ENCODE measurements at regions of chr9 and their contacts with region 1.

Region 1: GRCh38 chr9:69847491-69847890 is 26.9 kb downstream of the CFAP95 start:
- DNase-seq: no peak
- ATAC-seq: no peak

Region 2: DNA sequence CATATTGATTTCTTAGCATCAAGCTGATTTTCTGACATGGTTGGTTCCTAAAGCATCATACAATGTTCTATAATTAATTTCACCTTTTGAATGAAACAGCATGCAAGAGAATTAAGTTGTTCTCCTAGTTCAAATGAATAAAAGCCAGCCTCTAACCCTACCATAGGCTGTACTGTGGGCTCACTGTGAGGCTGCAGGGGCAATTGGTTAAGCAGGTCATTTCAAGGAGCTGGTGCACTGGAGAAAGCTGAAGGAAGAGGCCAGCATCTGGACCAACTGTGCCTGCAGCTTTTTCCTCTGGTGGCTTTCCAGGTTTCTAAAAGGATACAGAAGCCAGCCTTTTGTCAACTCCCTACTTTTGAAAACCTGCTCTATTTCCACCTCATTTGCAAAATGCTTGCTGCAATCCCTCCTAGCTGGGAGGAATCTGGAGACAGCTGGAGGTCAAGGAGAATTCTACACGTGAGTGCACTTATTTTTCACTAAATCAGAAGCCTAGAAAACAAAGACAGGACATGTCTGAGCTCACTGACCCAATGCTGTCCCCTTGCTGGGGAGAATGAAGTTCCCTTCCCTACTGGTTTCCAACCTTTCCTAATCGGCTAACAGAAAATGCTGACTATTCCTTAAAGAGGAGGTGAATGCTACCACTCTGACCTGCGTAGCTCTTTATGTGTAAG is 334.2 kb before region 1 on chr9:
- intact Hi-C with region 1: no loop called
- DNase-seq: no peak
- ATAC-seq: no peak

Region 3: GRCh38 chr9:69785757-69786156 is 61.7 kb before region 1 on chr9:
- intact Hi-C with region 1: loop called in 1 of 2 experiments (anchors 10 kb)
- DNase-seq: no peak
- ATAC-seq: no peak

Region 4: DNA sequence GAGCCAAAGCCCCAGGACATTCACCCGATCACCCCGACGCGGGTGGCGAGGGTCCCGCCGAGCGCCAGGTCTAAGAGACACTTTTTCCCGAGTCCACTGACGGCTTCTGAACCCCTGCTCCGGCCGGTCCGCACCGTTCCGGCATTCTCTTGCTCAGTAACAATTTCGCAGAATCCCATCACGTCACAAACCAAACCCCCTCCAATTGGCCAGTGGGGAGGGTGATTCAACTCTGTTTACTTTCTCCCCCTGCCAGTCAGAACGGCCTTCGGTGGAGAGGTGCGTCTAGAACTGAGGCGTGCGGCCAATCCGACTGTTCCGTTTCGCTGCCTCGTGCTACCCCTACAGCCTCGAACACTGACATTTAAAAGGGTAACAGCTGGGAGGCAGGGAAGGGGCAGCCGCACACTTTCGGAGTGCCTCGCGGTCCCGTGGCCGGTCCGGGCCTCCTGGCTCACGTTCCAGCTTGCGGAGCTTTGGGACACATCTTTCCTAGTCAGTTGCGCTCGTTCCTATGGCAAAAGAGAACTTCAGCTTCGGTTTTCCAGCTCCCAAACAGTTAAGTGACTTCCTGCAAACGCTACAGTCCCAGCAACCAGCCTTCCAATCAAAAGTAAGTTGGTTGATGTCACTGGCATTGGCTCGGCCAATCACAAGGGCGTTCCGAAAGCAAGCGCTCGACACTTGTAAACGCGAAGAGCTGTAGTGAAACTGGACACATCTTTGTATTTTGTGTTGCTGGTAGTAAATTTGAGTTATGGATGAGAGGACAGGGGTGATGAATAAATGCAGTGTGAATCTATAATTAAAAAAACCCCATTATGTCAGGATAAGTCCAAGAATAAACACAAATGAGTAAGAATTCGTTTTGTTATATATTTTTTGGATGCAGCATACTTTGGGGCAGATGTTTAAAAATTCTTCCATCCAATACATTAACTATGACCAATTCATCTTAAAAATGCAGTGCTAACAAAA is 566.6 kb after region 1 on chr9 and contains the start of gene KLF9:
- intact Hi-C with region 1: no loop called
- DNase-seq: peak; percentile 90 to 98
- ATAC-seq: peak; percentile 59
- total RNA-seq, gene KLF9: 26.7 to 55.2 TPM

Measured in left colon (tissue), 2 donors.